Colonic mucosa (tissue), 4 donors: ENCODE measurements at regions of chr3 and their contacts with region 1.

Region 1: GRCh38 chr3:157865352-157866000 is 240.7 kb downstream of the SHOX2 start:
- DNase-seq: peak; percentile 44
- H3K4me3 ChIP-seq: no peak overlapping the region
- H3K27ac ChIP-seq: no peak overlapping the region
- H3K4me1 ChIP-seq: no peaks in the 10 kb centered on the region
- H3K27me3 ChIP-seq: no peaks in the 10 kb centered on the region
- CTCF ChIP-seq: peak; percentile 63

Region 2: DNA sequence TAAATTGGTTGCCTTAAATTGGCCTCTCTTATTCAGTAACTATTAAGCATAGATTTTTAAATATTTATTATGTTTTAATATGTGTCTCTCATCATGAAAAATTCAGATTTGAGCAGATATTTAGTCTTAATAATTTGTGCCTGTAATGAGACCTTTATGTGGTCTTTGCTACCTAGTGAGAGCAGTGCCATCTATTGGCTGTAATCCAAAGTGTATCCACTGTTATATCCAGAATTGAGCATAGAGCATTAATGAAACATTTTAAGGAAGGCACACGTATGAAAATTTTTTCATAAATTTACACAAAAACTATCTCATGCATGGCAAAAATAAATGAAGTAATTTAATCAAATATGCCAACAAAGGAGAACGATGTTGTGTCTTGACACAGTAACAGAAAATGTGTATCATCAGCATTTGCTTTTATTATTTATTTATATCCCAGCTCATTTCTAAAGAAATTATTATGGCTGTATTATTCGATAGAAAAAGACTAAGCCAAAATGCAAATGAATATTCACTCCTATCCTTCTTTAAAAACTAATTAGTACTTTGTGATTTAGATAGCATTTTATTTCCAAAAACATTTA is 448.0 kb after region 1 on chr3:
- intact Hi-C with region 1: loop called (anchors 10 kb)
- DNase-seq: no peak
- H3K4me3 ChIP-seq: no peak overlapping the region
- H3K27ac ChIP-seq: no peak overlapping the region
- H3K4me1 ChIP-seq: no peaks in the 10 kb centered on the region
- H3K27me3 ChIP-seq: no peaks in the 10 kb centered on the region
- CTCF ChIP-seq: peak; percentile 33

Region 3: GRCh38 chr3:158434412-158435038 is 569.0 kb after region 1 on chr3:
- intact Hi-C with region 1: loop called (anchors 5 kb)
- DNase-seq: peak; percentile 70
- H3K4me3 ChIP-seq: no peak overlapping the region
- H3K27ac ChIP-seq: no peak overlapping the region
- H3K4me1 ChIP-seq: no peaks in the 10 kb centered on the region
- H3K27me3 ChIP-seq: no peaks in the 10 kb centered on the region
- CTCF ChIP-seq: peak; percentile 67